ENCODE measurements at regions of chr10 and their contacts with region 1.

Region 1: GRCh38 chr10:119859420-119860258 is 13.0 kb downstream of the MCMBP start:
- DNase-seq: no peak
- ATAC-seq: peak; percentile 60
- H3K4me3 ChIP-seq: no peak overlapping the region
- H3K27ac ChIP-seq: no peak overlapping the region
- H3K4me1 ChIP-seq: peaks cover 8% of the 10 kb centered on the region
- H3K27me3 ChIP-seq: no peaks in the 10 kb centered on the region
- CTCF ChIP-seq: peak; percentile 36 to 70 (median 57); a peak in 5 of 6 replicates
- EP300 ChIP-seq: no peak
- POLR2A ChIP-seq: no peak
- RAD21 ChIP-seq: peak; percentile 70

Region 2: DNA sequence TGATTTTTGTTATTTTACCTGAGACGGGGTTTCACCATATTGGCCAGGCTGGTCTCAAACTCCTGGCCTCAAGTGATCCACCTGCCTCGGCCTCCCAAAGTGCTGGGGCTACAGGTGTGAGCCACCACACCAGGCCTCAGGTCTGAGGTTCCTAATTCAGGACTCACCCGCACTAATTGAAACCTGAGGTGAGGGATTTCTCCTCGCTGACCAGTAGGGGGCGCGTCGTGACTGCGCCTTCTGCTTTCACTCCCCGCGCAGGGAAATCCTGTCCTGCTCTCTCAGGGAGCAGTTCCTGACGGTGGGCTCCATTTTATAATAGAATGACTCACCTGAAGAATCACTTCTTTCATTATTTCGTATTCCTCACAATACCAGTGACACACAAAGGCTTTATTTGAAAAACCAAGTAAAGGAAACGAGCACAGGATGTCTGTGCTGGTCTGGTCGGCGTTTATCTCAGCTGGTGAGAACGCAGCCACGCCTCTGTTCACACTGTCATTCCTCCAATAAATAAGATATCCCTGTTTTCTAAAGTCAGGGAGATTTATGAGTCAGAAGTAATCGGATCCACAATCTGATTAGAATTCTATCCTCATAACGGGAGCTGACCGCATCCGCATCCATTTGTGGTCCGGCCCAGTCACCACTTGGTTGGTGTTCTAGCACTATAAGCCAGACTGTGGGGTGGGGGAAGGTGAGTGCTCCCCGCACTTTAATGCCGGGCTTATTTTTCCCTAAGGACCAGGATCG is 173.0 kb before region 1 on chr10:
- CTCF ChIA-PET with region 1: interaction called, 276 read pairs
- POLR2A ChIA-PET with region 1: interaction called, 5 read pairs
- RAD21 ChIA-PET with region 1: interaction called, 144 read pairs
- SMC1A ChIA-PET with region 1: interaction called, 211 read pairs
- in situ Hi-C with region 1: loop called (anchors 5 kb)
- intact Hi-C with region 1: loop called (anchors 1 kb)
- DNase-seq: no peak
- ATAC-seq: peak; percentile 87
- H3K4me3 ChIP-seq: no peak overlapping the region
- H3K27ac ChIP-seq: no peak overlapping the region
- H3K4me1 ChIP-seq: no peaks in the 10 kb centered on the region
- H3K27me3 ChIP-seq: no peaks in the 10 kb centered on the region
- CTCF ChIP-seq: peak; percentile 84 to 92 (median 86)
- EP300 ChIP-seq: no peak
- POLR2A ChIP-seq: no peak
- RAD21 ChIP-seq: peak; percentile 96

Region 3: DNA sequence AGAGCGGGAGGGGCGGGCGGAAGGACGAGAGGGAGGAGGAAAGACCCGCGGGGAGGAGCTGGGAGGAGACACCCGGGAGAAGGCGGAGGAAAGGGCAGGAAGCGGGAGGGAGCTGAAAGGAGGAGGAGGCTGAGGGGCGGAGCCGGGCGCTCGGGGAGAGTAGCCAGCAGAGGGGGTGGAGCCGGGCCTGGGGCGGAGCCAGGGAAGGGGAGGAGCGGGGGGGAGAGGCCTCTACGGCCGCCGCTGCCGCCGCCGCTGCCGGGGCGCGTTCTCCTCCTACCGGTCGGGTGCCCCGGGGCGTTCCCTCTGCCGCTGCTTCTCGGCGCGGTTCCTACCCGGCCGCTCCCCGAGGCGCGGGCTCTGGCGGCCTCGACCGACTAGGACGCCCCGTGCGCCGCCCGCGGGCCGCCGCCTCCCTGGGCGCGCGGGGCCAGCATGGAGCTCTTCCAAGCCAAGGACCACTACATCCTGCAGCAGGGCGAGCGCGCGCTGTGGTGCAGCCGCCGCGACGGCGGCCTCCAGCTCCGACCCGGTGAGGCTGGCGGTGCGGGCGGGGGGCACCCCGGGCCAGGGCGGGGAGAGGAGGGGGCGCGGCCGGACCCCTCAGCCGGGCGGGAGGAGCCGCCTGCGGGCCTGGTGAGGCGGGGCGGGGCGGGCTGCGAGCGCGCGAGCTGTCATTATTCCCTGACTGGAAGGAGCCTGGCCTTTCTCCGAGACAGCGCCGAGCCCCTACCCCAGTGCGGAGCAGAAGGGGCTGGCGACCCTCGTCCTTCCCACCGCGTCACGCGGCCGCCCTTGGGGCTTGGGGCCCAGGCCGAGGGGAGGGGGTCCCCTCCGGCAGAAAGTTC is 133.6 kb before region 1 on chr10 and contains the start of gene INPP5F:
- CTCF ChIA-PET with region 1: interaction called, 29 read pairs
- POLR2A ChIA-PET with region 1: interaction called, 6 read pairs
- RAD21 ChIA-PET with region 1: interaction called, 11 read pairs
- SMC1A ChIA-PET with region 1: interaction called, 6 read pairs
- in situ Hi-C with region 1: no loop called
- intact Hi-C with region 1: no loop called
- DNase-seq: peak; percentile 88
- ATAC-seq: peak; percentile 88
- H3K4me3 ChIP-seq: peak within 1 kb of the TSS; percentile 95
- H3K27ac ChIP-seq: peak within 1 kb of the TSS; percentile 82
- H3K4me1 ChIP-seq: peaks cover 17% of the 10 kb centered on the region
- H3K27me3 ChIP-seq: no peaks in the 10 kb centered on the region
- CTCF ChIP-seq: peak in 2 of 3 experiments; percentile 17 to 38; a peak in 3 of 6 replicates
- EP300 ChIP-seq: no peak
- POLR2A ChIP-seq: peak; percentile 59; the same call in 1 of the 2 replicates
- RAD21 ChIP-seq: no peak
- polyA plus RNA-seq, gene INPP5F: 6.0 to 13.4 TPM

Region 4: DNA sequence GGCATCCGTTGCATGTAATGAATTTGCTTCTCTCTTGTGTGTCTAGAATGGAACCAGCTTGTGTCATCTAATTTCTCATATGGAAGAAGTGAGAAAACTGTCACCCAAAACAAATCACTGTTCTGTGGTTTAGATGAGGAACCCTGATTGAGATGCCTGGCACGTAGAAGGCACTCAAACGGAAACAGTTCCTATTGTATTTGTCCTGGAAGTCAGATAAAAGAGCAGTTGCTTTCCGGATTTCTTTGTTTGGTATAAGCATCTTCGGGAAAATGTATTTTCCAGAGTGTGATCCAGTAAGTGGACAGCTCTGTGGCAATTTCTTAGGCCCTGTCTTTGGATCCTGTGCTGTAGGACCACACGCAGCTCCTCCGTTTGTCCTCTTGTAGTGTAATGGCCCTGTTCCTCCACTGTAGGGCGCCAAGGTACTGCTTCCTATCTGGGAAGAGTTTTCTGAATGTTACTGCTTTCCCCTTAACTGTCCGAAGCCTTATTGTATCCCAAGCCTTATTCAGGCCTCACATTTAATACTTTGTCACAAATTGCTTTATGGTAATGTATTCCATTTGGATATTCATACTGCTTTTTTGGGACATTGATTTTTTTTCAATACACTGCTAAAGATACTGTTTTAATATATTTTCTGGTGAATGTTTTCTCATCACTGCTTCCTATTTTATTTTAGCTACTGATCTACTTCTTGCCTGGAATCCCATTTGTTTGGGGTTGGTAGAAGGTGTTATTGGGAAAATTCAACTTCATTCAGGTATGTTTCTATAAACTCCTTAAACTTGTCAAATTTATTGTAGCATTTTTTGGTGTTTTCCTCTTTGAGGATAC is 109.0 kb before region 1 on chr10:
- CTCF ChIA-PET with region 1: interaction called, 243 read pairs
- POLR2A ChIA-PET with region 1: interaction called, 8 read pairs
- RAD21 ChIA-PET with region 1: interaction called, 136 read pairs
- SMC1A ChIA-PET with region 1: interaction called, 164 read pairs
- in situ Hi-C with region 1: loop called (anchors 5 kb)
- intact Hi-C with region 1: loop called (anchors 1 kb)
- DNase-seq: peak; percentile 36
- ATAC-seq: peak; percentile 95
- H3K4me3 ChIP-seq: no peak overlapping the region
- H3K27ac ChIP-seq: no peak overlapping the region
- H3K4me1 ChIP-seq: no peaks in the 10 kb centered on the region
- H3K27me3 ChIP-seq: no peaks in the 10 kb centered on the region
- CTCF ChIP-seq: peak; percentile 93
- EP300 ChIP-seq: no peak; a peak in 1 of 4 replicates
- POLR2A ChIP-seq: no peak
- RAD21 ChIP-seq: peak; percentile 99

Region 5: DNA sequence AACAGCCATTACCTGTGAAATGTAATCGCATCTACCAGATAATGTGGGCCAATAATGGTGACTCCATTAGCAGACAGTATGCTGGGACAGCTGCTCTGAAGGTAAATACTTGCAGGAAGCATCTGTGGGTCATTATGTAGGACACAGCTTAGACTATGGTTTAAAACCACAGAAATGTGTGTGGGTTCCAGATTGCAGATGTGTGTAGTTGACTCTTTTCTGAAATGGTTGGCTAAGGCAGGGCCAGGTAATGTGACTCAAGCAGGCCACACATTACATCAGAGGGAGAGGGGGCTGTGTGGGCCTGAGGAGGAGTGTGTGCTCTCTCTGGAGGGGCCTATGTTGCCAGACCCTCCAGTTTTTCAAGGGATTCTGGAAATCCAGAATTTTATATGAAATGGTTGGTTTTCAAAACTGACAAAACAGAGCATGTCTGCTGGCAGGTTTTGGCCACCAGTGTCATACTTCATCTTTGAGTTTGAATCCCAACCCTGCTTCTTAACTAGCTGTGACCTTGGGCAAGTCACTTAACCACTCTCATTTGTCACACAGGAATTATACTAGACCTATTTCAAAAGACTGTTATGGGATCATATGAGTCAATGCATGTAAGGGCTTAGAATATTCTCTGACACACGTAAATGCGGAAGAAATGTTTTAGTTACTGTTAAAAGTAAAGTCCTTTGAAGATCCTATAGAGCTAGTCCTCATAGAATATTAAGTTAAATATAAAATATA is 51.5 kb before region 1 on chr10:
- CTCF ChIA-PET with region 1: interaction called, 13 read pairs
- POLR2A ChIA-PET with region 1: no interaction called
- RAD21 ChIA-PET with region 1: interaction called, 4 read pairs
- SMC1A ChIA-PET with region 1: interaction called, 7 read pairs
- in situ Hi-C with region 1: no loop called
- intact Hi-C with region 1: no loop called
- DNase-seq: no peak
- ATAC-seq: peak; percentile 93
- H3K4me3 ChIP-seq: no peak overlapping the region
- H3K27ac ChIP-seq: no peak overlapping the region
- H3K4me1 ChIP-seq: peaks cover 2% of the 10 kb centered on the region; the same call in 1 of the 2 replicates
- H3K27me3 ChIP-seq: no peaks in the 10 kb centered on the region
- CTCF ChIP-seq: no peak
- EP300 ChIP-seq: no peak
- POLR2A ChIP-seq: no peak
- RAD21 ChIP-seq: no peak

Region 6: DNA sequence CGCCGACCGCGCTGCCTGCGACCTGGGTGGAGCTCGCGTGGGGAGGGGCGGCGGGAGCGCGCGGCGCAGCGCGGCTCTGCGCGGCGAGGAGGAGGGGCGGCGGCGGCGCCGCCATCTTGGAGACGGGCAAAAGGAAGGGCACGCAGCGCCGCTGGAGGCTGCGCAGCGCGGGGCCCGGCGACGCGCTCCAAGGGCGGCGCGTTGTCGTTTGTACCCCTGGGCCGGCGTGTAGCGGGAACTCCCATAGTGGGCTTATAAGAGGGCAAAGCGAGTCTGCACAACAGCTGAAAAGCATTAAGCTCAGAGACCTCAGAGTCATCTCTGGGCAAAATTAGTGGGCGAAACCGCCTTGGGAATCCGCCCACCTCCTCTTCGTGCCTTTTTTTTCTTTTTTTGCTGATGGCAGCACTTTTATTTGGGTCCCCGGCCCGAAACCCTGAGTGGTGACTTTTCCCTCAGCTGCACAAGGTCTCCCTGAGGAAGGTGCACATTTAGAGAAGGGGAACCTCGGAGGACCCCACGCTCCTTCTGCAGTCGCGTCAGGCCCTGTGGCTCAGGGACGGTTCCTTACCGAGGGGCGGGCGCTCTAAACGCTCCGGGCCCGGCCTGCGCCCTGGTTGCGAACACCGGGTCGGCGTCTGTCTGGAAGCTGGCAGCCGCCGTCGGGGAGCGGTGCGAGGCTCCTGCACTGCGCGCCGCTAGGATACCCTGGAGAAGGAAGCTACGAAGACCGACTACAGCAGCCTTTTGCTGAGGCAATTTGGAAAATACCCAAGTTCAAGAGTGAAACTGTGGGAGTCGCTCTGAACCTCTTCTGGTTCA is 13.4 kb after region 1 on chr10:
- CTCF ChIA-PET with region 1: interaction called, 85 read pairs
- POLR2A ChIA-PET with region 1: interaction called, 11 read pairs
- RAD21 ChIA-PET with region 1: interaction called, 54 read pairs
- SMC1A ChIA-PET with region 1: interaction called, 27 read pairs
- in situ Hi-C with region 1: no loop called
- intact Hi-C with region 1: no loop called
- DNase-seq: peak; percentile 49
- ATAC-seq: peak; percentile 93
- H3K4me3 ChIP-seq: peak overlapping the region; percentile 85
- H3K27ac ChIP-seq: peak overlapping the region; percentile 83
- H3K4me1 ChIP-seq: peaks cover 9% of the 10 kb centered on the region
- H3K27me3 ChIP-seq: no peaks in the 10 kb centered on the region
- CTCF ChIP-seq: 0 out of 6 replicates have a peak, but pooled peaks of 1 of the 3 experiments have one; percentile 4
- EP300 ChIP-seq: no peak
- POLR2A ChIP-seq: peak; percentile 70
- RAD21 ChIP-seq: no peak